ENCODE measurements at regions of chr14 and their contacts with region 1.

Region 1: GRCh38 chr14:72516936-72517700 is 376.8 kb downstream of the DPF3 start:
- DNase-seq: peak; percentile 79
- ATAC-seq: peak; percentile 82

Region 2: DNA sequence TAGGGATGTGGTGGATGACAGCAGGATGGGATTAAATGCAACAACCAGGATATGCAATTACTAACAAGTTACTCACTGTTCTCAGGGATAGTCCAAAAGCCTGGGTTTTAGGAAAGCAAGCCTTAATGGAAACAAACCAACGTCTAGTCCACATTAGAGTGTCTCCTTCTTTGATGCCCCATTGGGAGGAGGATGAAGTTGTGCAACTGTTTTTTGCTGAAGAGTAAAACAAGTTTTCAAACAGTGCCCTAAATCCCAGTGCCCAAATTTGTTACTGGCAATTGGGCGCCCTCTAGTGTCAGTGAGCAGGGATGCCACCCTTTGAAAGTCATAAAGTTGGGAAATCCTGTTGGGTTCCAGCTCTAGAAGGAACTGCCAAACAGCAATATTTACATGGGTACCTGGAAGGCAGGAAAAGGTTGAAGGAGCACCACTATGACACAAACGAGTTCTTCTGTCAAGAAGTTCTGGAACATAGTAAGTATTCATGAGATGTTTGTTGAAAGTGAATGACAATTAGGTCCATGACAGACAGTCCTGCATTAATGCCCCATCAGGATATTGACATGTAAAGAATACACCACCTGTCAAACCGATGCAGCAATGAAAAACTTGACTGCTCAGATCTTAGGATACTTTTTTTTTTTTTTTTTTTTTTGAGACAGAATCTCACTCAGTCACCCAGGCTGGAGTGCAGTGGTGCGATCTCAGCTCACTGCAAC is 387.9 kb after region 1 on chr14:
- intact Hi-C with region 1: loop called (anchors 5 kb)
- DNase-seq: peak; percentile 76
- ATAC-seq: peak; percentile 91

Measured in sciatic nerve (tissue), 2 donors.